AG04450 (cell line): ENCODE measurements at regions of chr10 and their contacts with region 1.

Region 1: GRCh38 chr10:86399879-86400704 is 33.5 kb upstream of the GRID1 start:
- DNase-seq: peak; percentile 88
- H3K4me3 ChIP-seq: peak overlapping the region; percentile 66
- H3K27ac ChIP-seq: peak overlapping the region; percentile 21
- H3K27me3 ChIP-seq: no peaks in the 10 kb centered on the region
- CTCF ChIP-seq: peak; percentile 93

Region 2: DNA sequence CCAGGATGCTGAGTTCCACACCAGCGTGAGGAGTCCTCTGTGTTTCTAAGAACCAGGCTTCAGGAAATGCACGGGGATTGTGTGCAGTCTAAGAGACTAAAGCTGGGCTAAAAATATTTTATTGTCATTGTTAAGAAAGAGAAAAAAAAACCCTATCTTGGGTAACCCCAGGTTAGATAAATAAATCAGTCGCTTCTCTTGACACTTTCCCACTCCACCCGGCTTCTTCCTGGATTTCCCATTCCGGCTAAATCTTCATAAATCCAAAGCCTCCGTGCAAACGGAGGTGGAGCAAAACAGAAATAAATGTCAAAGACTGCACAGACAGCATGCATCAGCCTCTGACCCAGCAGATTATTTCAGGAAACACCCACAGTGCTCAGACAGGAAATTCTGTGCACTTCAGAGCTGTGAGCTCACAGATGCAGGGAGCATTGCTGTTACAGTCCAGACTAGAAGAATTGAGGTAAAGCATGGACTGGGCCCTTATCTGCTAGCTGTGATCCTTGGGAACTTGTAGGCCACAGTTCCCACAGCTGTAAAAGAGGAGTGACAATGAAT is 11.3 kb after region 1 on chr10:
- CTCF ChIA-PET with region 1: interaction called, 10 read pairs
- POLR2A ChIA-PET with region 1: interaction called, 3 read pairs
- DNase-seq: peak; percentile 46
- H3K4me3 ChIP-seq: no peak overlapping the region
- H3K27ac ChIP-seq: peak overlapping the region; percentile 58
- H3K27me3 ChIP-seq: no peaks in the 10 kb centered on the region
- CTCF ChIP-seq: no peak

Region 3: DNA sequence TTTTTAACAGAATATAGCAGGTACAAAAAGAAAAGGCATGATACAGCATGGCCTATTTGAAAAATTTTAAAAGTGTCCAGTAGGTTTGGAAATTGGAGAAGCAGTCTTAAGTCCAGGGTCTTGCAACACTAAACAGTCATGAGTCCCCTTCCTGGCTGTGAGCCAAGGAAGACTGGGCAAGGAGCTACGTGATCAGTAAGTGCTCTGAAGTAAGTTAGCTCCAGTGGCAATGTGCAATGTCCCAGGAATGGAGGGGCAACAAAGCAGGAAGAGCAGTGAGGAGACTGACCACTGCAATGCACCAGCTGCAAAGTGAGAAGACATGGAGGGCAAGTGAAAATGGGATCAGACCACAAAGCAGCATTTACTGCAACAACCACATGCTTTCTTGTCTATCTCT is 39.5 kb after region 1 on chr10:
- CTCF ChIA-PET with region 1: interaction called, 10 read pairs
- POLR2A ChIA-PET with region 1: no interaction called
- DNase-seq: peak; percentile 87
- H3K4me3 ChIP-seq: no peak overlapping the region
- H3K27ac ChIP-seq: peak overlapping the region; percentile 22
- H3K27me3 ChIP-seq: no peaks in the 10 kb centered on the region
- CTCF ChIP-seq: 0 out of 2 replicates have a peak, but pooled peaks have one; percentile 13

Region 4: GRCh38 chr10:86585037-86585725 is 185.1 kb after region 1 on chr10:
- CTCF ChIA-PET with region 1: interaction called, 46 read pairs
- POLR2A ChIA-PET with region 1: interaction called, 8 read pairs
- DNase-seq: no peak
- H3K4me3 ChIP-seq: no peak overlapping the region
- H3K27ac ChIP-seq: no peak overlapping the region
- H3K27me3 ChIP-seq: peaks cover 3% of the 10 kb centered on the region
- CTCF ChIP-seq: peak; percentile 96